ENCODE measurements at regions of chr7 and their contacts with region 1.

Region 1: DNA sequence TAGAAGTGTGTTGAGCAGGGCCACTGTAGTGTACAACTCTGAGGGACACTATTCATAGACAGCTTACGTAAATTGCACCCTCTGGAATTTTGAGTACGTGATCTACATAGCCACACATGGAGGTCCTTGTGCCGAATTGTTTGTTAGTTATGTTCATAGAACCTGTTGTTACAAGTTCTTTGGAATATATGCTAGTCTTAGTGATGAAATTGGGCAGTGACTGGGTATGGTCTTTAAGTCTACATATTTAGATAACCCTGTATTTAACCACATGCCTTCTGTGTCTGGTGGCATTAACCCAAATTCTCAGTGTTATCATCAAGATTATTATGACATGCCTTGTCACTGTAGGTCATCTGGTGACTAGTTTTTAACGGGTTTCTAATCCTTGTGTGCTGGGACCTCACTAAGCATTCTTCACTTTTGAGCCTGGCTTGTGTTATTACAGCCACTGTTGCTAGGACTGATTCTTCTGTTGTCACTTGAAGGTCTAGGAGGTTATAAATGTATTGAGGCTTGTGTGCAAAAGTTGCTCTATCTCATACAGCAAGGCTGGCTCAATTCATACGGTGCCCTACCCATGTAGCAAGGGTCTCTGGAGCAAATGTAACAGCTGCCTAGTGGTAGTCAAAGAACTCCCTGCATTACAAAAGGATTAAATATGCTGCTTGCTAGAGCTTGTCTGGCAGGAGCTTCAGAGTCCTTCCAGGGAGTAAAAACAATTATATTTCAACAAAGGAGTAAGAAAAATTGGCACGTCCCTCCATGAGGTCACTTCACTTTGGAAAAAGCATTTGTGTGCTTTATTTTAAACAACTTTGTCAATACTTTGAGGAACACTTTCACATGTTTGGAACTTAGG is 65.4 kb downstream of the CDK14 start:
- DNase-seq: no peak
- ATAC-seq: no peak
- H3K4me3 ChIP-seq: no peak overlapping the region
- H3K4me3 Mint-ChIP-seq: no peak overlapping the region
- H3K27ac ChIP-seq: no peak overlapping the region
- H3K27ac Mint-ChIP-seq: no peak overlapping the region
- H3K4me1 ChIP-seq: peaks cover 20 to 25% of the 10 kb centered on the region in 2 donors
- H3K4me1 Mint-ChIP-seq: peaks cover 35% of the 10 kb centered on the region
- H3K27me3 ChIP-seq: no peaks in the 10 kb centered on the region
- H3K27me3 Mint-ChIP-seq: no peaks in the 10 kb centered on the region
- CTCF ChIP-seq: no peak

Region 2: GRCh38 chr7:90701021-90701420 is 39.5 kb after region 1 on chr7:
- CTCF ChIA-PET with region 1: interaction called, 3 read pairs
- POLR2A ChIA-PET with region 1: no interaction called
- intact Hi-C with region 1: loop called (anchors 5 kb)
- DNase-seq: peak; percentile 38
- ATAC-seq: peak; percentile 49
- H3K4me3 ChIP-seq: peak overlapping the region in 4 of 5 experiments; percentile 16 to 64 (median 38)
- H3K4me3 Mint-ChIP-seq: peak overlapping the region; percentile 84
- H3K27ac ChIP-seq: no peak overlapping the region
- H3K27ac Mint-ChIP-seq: peak overlapping the region; percentile 38
- H3K4me1 ChIP-seq: peaks cover 21 to 22% of the 10 kb centered on the region in 2 donors
- H3K4me1 Mint-ChIP-seq: peaks cover 44% of the 10 kb centered on the region
- H3K27me3 ChIP-seq: no peaks in the 10 kb centered on the region
- H3K27me3 Mint-ChIP-seq: no peaks in the 10 kb centered on the region
- CTCF ChIP-seq: no peak